Activated CD8-positive, alpha-beta T cell treated with anti-CD3 and anti-CD28 coated beads, Interleukin-2, amount 10 ng/mL, durations not matched to agents 7 days and 5 days (primary cell): ENCODE measurements at regions of chr2 and their contacts with region 1.

Region 1: DNA sequence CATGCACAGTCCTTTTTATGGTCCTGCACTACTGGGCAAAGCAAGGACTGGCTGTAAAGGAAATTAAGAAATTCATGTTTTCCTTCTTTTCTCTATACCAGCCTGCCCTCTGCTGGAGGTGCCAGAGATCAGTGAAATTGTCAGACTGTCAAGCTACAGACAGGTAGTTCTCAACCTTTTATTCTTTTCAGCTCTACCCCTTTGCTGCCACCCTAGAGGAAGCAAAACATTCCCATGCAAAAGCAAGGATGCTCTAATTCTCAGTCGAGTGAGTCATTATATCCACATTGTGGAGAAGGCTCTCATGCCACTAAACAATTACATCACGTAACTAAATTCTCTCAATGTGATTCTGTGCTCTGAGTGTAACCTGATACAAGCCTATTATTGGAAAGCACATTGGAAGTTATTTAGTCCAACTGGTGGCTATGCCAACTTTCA is 25.0 kb upstream of the RAPGEF4 start:
- DNase-seq: peak; percentile 59
- ATAC-seq: no peak
- H3K4me3 Mint-ChIP-seq: no peak overlapping the region
- H3K27ac Mint-ChIP-seq: no peak overlapping the region
- H3K4me1 Mint-ChIP-seq: no peaks in the 10 kb centered on the region
- H3K27me3 Mint-ChIP-seq: peaks cover 9% of the 10 kb centered on the region

Region 2: DNA sequence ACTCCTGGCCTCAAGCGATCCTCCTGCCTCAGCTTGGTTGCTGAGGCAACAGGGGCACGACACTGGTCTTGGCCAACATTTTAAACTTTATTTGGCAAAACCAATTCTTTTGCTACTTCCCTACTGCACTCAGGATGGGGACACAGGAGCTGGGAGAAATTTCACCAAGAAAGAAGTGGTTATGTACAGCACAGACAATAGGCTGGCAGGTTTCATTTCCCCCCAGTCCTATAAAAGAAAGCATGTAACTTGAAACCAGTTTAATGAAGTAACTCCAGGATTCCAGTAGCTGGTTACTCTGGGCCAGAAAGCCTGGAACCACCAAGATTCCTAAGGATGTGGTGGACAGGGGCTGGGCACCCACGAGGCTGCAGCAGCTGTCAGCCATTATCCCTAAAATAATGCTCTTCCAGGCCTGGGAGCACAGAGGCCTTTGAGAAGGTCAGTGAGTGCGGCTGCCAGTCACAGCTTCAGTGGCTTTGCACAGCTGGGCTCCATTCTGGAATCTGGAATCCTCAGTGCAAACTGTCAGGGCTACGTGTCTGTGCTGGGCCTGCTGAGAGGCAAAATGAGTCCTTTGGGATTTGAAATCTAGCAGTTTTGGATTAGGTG is 425.5 kb before region 1 on chr2:
- CTCF ChIA-PET with region 1: no interaction called
- POLR2A ChIA-PET with region 1: no interaction called
- DNase-seq: no peak
- ATAC-seq: no peak
- H3K4me3 Mint-ChIP-seq: no peak overlapping the region
- H3K27ac Mint-ChIP-seq: no peak overlapping the region
- H3K4me1 Mint-ChIP-seq: peaks cover 8% of the 10 kb centered on the region
- H3K27me3 Mint-ChIP-seq: peaks cover 2% of the 10 kb centered on the region

Region 3: GRCh38 chr2:172446474-172447063 is 264.0 kb before region 1 on chr2:
- CTCF ChIA-PET with region 1: no interaction called
- POLR2A ChIA-PET with region 1: no interaction called
- DNase-seq: no peak
- ATAC-seq: peak; percentile 58
- H3K4me3 Mint-ChIP-seq: no peak overlapping the region
- H3K27ac Mint-ChIP-seq: no peak overlapping the region
- H3K4me1 Mint-ChIP-seq: peaks cover 46% of the 10 kb centered on the region
- H3K27me3 Mint-ChIP-seq: no peaks in the 10 kb centered on the region

Region 4: GRCh38 chr2:172674034-172674967 is 36.3 kb before region 1 on chr2:
- CTCF ChIA-PET with region 1: interaction called, 17 read pairs
- POLR2A ChIA-PET with region 1: no interaction called
- DNase-seq: peak; percentile 39
- ATAC-seq: peak; percentile 72
- H3K4me3 Mint-ChIP-seq: peak overlapping the region; percentile 23
- H3K27ac Mint-ChIP-seq: no peak overlapping the region
- H3K4me1 Mint-ChIP-seq: peaks cover 5% of the 10 kb centered on the region
- H3K27me3 Mint-ChIP-seq: no peaks in the 10 kb centered on the region